Naive thymus-derived CD4-positive, alpha-beta T cell (primary cell): ENCODE measurements at regions of chr7 and their contacts with region 1.

Region 1: GRCh38 chr7:151876899-151877777 is at the start of gene PRKAG2:
- DNase-seq: peak; percentile 58 to 81 (median 76)
- ATAC-seq: peak; percentile 65
- H3K4me3 ChIP-seq: peak within 1 kb of the TSS; percentile 99
- H3K4me3 Mint-ChIP-seq: peak within 1 kb of the TSS; percentile 93 to 98 (median 96)
- H3K27ac ChIP-seq: peak within 1 kb of the TSS; percentile 87
- H3K27ac Mint-ChIP-seq: peak within 1 kb of the TSS; percentile 84 to 96 (median 91)
- H3K4me1 ChIP-seq: peaks cover 7 to 15% of the 10 kb centered on the region in 2 donors
- H3K4me1 Mint-ChIP-seq: peaks cover 6 to 33% (median 20%) of the 10 kb centered on the region in 7 donors
- H3K27me3 ChIP-seq: no peaks in the 10 kb centered on the region
- H3K27me3 Mint-ChIP-seq: peaks cover 0 to 41% (median 0%) of the 10 kb centered on the region in 5 donors
- total RNA-seq, gene PRKAG2: 15.0 to 74.4 (median 66.1) TPM

Region 2: DNA sequence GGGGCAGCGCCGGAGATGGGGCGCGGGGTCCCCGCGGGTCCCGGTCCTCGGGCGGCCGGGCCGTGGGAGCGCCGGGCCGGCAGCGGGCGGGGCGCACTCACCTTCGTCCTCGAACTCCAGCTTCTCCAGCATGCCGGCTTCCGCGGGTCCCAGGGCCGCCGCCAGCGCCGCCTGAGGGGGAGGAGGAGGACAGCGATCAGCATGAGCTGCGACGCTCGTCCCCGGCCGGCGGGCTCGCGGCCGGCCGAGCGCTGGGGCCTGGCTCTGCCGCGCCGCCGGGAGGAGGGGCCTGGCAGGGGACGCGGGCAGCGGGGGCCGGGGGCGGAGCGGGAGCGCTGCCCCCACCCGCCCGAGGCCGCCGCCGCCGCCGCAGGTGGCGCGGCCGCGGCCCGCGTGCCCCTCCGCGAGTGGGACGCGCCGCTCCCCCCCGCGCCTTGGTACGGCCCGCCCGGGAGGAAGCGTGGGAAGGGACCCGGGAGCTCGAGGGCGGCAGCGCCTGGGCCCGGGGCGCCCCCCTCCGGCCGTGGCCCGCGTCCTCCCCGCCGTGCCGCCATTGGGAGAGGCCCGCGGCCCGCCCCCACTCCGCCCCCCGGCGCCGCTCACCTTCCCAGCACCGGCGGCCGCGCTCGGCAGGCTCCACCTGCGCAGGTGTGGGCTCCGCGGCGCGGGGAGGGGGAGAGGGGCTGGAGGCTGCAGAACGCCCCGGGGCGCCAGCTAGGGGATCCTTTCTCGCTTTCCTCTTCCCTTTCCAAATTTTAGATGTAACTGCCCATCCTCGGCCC is 245.0 kb before region 1 on chr7:
- CTCF ChIA-PET with region 1: no interaction called
- POLR2A ChIA-PET with region 1: interaction called, 9 read pairs
- intact Hi-C with region 1: loop called in 1 of 2 experiments (anchors 1 kb)
- DNase-seq: peak; percentile 81 to 95 (median 87)
- ATAC-seq: peak; percentile 93
- H3K4me3 ChIP-seq: peak overlapping the region; percentile 80
- H3K4me3 Mint-ChIP-seq: peak overlapping the region; percentile 89 to 99 (median 96)
- H3K27ac ChIP-seq: peak overlapping the region; percentile 81
- H3K27ac Mint-ChIP-seq: peak overlapping the region; percentile 90 to 97 (median 95)
- H3K4me1 ChIP-seq: peaks cover 12% of the 10 kb centered on the region in 2 donors
- H3K4me1 Mint-ChIP-seq: peaks cover 14 to 48% (median 30%) of the 10 kb centered on the region in 7 donors
- H3K27me3 ChIP-seq: no peaks in the 10 kb centered on the region
- H3K27me3 Mint-ChIP-seq: no peaks in the 10 kb centered on the region

Region 3: GRCh38 chr7:151838861-151839391 is 38.2 kb before region 1 on chr7:
- CTCF ChIA-PET with region 1: no interaction called
- POLR2A ChIA-PET with region 1: interaction called, 3 read pairs
- intact Hi-C with region 1: loop called in 1 of 2 experiments (anchors 2 kb)
- DNase-seq: peak in 5 of 9 donors; percentile 10 to 36 (median 20)
- ATAC-seq: peak; percentile 84
- H3K4me3 ChIP-seq: peak overlapping the region; percentile 15
- H3K4me3 Mint-ChIP-seq: peak overlapping the region; percentile 56 to 84 (median 72)
- H3K27ac ChIP-seq: peak overlapping the region; percentile 25
- H3K27ac Mint-ChIP-seq: peak overlapping the region in 8 of 9 donors; percentile 10 to 85 (median 62)
- H3K4me1 ChIP-seq: peaks cover 16 to 23% of the 10 kb centered on the region in 2 donors
- H3K4me1 Mint-ChIP-seq: peaks cover 21 to 52% (median 37%) of the 10 kb centered on the region in 7 donors
- H3K27me3 ChIP-seq: no peaks in the 10 kb centered on the region
- H3K27me3 Mint-ChIP-seq: no peaks in the 10 kb centered on the region

Region 4: GRCh38 chr7:151856545-151856944 is 20.6 kb before region 1 on chr7:
- CTCF ChIA-PET with region 1: no interaction called
- POLR2A ChIA-PET with region 1: no interaction called
- intact Hi-C with region 1: no loop called
- DNase-seq: no peak
- ATAC-seq: no peak
- H3K4me3 ChIP-seq: no peak overlapping the region
- H3K4me3 Mint-ChIP-seq: peak overlapping the region in 1 of 10 donors; percentile 45
- H3K27ac ChIP-seq: no peak overlapping the region
- H3K27ac Mint-ChIP-seq: no peak overlapping the region
- H3K4me1 ChIP-seq: peaks cover 0 to 5% of the 10 kb centered on the region in 2 donors
- H3K4me1 Mint-ChIP-seq: peaks cover 3 to 63% (median 47%) of the 10 kb centered on the region in 7 donors
- H3K27me3 ChIP-seq: no peaks in the 10 kb centered on the region
- H3K27me3 Mint-ChIP-seq: no peaks in the 10 kb centered on the region

Region 5: DNA sequence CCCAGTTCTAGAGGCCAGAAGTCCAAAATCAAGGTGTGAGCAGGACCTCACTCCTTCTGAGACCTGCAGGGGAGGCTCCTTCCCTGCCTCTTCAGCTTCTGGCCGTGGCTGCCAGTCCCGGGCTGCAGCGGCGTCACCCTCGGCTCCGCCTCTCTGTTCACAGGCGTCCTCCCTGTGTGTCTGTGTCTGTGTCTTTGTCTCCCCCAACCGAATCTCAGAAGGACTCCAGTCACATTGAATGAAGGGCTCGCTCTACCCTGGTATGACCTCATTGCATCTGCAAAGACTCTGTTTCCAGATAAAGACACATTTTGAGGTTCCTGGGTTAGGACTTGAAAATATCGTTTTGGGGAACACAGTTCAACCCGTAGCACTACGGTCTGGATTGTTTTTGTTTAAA is 115.2 kb after region 1 on chr7:
- CTCF ChIA-PET with region 1: no interaction called
- POLR2A ChIA-PET with region 1: no interaction called
- intact Hi-C with region 1: loop called in 1 of 2 experiments (anchors 5 kb)
- DNase-seq: peak in 8 of 9 donors; percentile 14 to 54 (median 44)
- ATAC-seq: peak; percentile 96
- H3K4me3 ChIP-seq: no peak overlapping the region
- H3K4me3 Mint-ChIP-seq: peak overlapping the region in 3 of 10 donors; percentile 3 to 25 (median 18)
- H3K27ac ChIP-seq: no peak overlapping the region
- H3K27ac Mint-ChIP-seq: peak overlapping the region in 2 of 9 donors; percentile 27 to 55
- H3K4me1 ChIP-seq: no peaks in the 10 kb centered on the region
- H3K4me1 Mint-ChIP-seq: peaks cover 0 to 10% (median 7%) of the 10 kb centered on the region in 7 donors
- H3K27me3 ChIP-seq: no peaks in the 10 kb centered on the region
- H3K27me3 Mint-ChIP-seq: peaks cover 14 to 41% (median 30%) of the 10 kb centered on the region in 5 donors

Region 6: GRCh38 chr7:152463709-152464311 is 586.7 kb after region 1 on chr7:
- CTCF ChIA-PET with region 1: no interaction called
- POLR2A ChIA-PET with region 1: interaction called, 5 read pairs
- intact Hi-C with region 1: loop called (anchors 2 to 10 kb)
- DNase-seq: peak; percentile 99 to 100 (median 100)
- ATAC-seq: peak; percentile 96
- H3K4me3 ChIP-seq: peak overlapping the region; percentile 82
- H3K4me3 Mint-ChIP-seq: peak overlapping the region; percentile 64 to 96 (median 92)
- H3K27ac ChIP-seq: peak overlapping the region; percentile 99
- H3K27ac Mint-ChIP-seq: peak overlapping the region in 7 of 9 donors; percentile 62 to 93 (median 88)
- H3K4me1 ChIP-seq: peaks cover 5% of the 10 kb centered on the region in 2 donors
- H3K4me1 Mint-ChIP-seq: peaks cover 5 to 17% (median 7%) of the 10 kb centered on the region in 7 donors
- H3K27me3 ChIP-seq: no peaks in the 10 kb centered on the region
- H3K27me3 Mint-ChIP-seq: no peaks in the 10 kb centered on the region